MCF 10A (cell line): ENCODE measurements at regions of chr22 and their contacts with region 1.

Region 1: DNA sequence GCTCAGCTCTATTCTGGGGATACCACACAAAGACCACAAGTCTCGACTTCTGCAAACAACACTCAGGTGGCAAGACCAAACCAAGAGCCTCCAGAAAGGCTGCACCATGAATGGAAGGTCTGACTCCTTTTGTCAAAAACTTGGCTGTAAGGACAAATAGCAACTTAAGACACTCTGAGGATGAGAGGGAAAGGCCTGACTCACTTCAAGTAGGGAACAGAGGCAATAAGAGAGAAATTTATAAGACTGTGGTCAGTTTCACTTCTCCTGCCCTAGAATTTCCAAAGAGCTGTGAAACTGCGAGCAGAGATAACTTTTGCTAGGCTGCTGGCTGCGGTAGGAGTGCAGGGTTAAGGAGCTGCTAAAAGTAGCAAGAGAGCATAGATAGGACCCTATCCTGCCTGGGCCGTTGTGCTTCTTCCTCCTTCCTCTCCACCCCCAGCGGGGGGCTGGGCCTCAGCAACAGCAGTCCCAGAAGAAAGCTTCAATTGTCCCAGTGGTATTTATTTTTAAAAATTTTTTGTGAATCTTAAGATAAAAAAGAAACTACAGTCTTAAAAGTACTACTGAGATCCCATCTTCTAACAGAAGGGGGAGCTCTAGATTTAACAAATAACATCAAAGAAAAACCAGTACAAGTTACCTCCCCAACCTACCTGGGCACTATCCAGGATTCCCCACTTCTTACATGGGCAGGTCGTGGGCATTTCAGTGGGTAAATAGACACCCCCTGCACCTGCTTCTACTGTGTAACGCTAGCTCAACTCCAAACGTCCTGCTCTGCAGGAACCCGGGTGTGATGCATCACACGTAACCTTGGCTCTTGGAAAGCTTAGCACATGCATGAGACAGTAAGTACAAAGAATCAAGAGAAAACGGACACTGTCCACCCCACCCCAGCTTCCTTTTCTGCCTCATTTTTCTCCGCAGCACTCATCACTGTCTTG is 66.4 kb downstream of the SGSM3 start:
- DNase-seq: peak; percentile 71
- H3K4me3 Mint-ChIP-seq: no peak overlapping the region
- H3K27ac Mint-ChIP-seq: peak overlapping the region; percentile 19
- H3K4me1 Mint-ChIP-seq: peaks cover 27% of the 10 kb centered on the region
- H3K27me3 Mint-ChIP-seq: no peaks in the 10 kb centered on the region
- CTCF ChIP-seq: peak; percentile 54

Region 2: GRCh38 chr22:40326905-40327735 is 109.7 kb before region 1 on chr22:
- CTCF ChIA-PET with region 1: no interaction called
- POLR2A ChIA-PET with region 1: no interaction called
- intact Hi-C with region 1: no loop called
- DNase-seq: no peak
- H3K4me3 Mint-ChIP-seq: no peak overlapping the region
- H3K27ac Mint-ChIP-seq: no peak overlapping the region
- H3K4me1 Mint-ChIP-seq: no peaks in the 10 kb centered on the region
- H3K27me3 Mint-ChIP-seq: no peaks in the 10 kb centered on the region
- CTCF ChIP-seq: no peak

Region 3: GRCh38 chr22:40449676-40450035 is 12.9 kb after region 1 on chr22:
- CTCF ChIA-PET with region 1: interaction called, 18 read pairs
- POLR2A ChIA-PET with region 1: interaction called, 17 read pairs
- intact Hi-C with region 1: no loop called
- DNase-seq: peak; percentile 78
- H3K4me3 Mint-ChIP-seq: no peak overlapping the region
- H3K27ac Mint-ChIP-seq: peak overlapping the region; percentile 63
- H3K4me1 Mint-ChIP-seq: peaks cover 31% of the 10 kb centered on the region
- H3K27me3 Mint-ChIP-seq: no peaks in the 10 kb centered on the region
- CTCF ChIP-seq: no peak

Region 4: GRCh38 chr22:40479126-40479800 is 42.5 kb after region 1 on chr22:
- CTCF ChIA-PET with region 1: interaction called, 14 read pairs
- POLR2A ChIA-PET with region 1: interaction called, 10 read pairs
- intact Hi-C with region 1: no loop called
- DNase-seq: peak; percentile 6
- H3K4me3 Mint-ChIP-seq: no peak overlapping the region
- H3K27ac Mint-ChIP-seq: no peak overlapping the region
- H3K4me1 Mint-ChIP-seq: peaks cover 32% of the 10 kb centered on the region
- H3K27me3 Mint-ChIP-seq: no peaks in the 10 kb centered on the region
- CTCF ChIP-seq: peak; percentile 7

Region 5: GRCh38 chr22:40525249-40525884 is 88.6 kb after region 1 on chr22:
- CTCF ChIA-PET with region 1: interaction called, 14 read pairs
- POLR2A ChIA-PET with region 1: interaction called, 5 read pairs
- intact Hi-C with region 1: loop called (anchors 5 kb)
- DNase-seq: peak; percentile 65
- H3K4me3 Mint-ChIP-seq: no peak overlapping the region
- H3K27ac Mint-ChIP-seq: no peak overlapping the region
- H3K4me1 Mint-ChIP-seq: peaks cover 12% of the 10 kb centered on the region
- H3K27me3 Mint-ChIP-seq: no peaks in the 10 kb centered on the region
- CTCF ChIP-seq: peak; percentile 54

Region 6: GRCh38 chr22:40645579-40646197 is 208.9 kb after region 1 on chr22:
- CTCF ChIA-PET with region 1: interaction called, 220 read pairs
- POLR2A ChIA-PET with region 1: interaction called, 44 read pairs
- intact Hi-C with region 1: loop called (anchors 1 kb)
- DNase-seq: no peak
- H3K4me3 Mint-ChIP-seq: no peak overlapping the region
- H3K27ac Mint-ChIP-seq: peak overlapping the region; percentile 54
- H3K4me1 Mint-ChIP-seq: peaks cover 13% of the 10 kb centered on the region
- H3K27me3 Mint-ChIP-seq: no peaks in the 10 kb centered on the region
- CTCF ChIP-seq: no peak

Region 7: GRCh38 chr22:40757071-40757470 is 320.3 kb after region 1 on chr22:
- CTCF ChIA-PET with region 1: interaction called, 3 read pairs
- POLR2A ChIA-PET with region 1: interaction called, 3 read pairs
- intact Hi-C with region 1: loop called (anchors 10 kb)
- DNase-seq: no peak
- H3K4me3 Mint-ChIP-seq: no peak overlapping the region
- H3K27ac Mint-ChIP-seq: no peak overlapping the region
- H3K4me1 Mint-ChIP-seq: peaks cover 11% of the 10 kb centered on the region
- H3K27me3 Mint-ChIP-seq: no peaks in the 10 kb centered on the region
- CTCF ChIP-seq: no peak